ENCODE measurements at regions of chr19 and their contacts with region 1.

Region 1: DNA sequence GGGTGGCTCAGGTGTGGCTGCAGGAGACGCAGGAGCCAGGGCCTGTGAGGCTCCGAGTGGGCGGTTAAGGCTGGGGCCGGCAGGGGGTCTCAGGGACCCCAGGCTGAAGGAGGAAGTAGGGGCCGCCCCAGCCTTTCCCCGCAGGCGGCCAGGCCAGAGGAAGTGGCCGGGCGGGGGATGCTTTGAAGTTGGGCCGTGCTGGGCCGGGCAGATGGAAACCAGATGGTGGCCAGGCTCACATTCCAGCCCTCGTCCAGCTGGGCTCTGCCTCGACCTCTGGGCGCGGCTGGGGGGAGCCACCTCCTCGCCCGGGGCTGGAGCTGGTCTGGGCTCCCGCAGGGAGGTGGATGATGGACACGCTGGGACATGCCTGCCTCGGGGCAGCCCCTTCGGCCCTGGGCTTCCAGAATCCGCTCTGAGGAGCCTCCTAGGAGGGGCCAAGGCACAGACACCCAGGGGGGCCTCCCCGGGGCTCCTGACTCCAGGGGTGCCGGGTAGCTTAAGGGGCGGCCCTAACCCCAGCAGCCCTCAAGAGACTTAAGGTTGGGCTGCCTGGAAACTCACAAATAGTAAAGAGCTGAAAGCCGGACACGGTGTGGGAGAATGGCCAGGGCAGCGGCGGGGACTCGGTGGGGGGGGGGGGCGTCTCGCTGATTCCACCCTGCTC is 7.5 kb downstream of the ARID3A start:
- DNase-seq: peak; percentile 94
- ATAC-seq: peak; percentile 95
- H3K4me3 ChIP-seq: peak overlapping the region; percentile 19; the same call in 1 of the 2 replicates
- H3K27ac ChIP-seq: peak overlapping the region; percentile 98
- H3K4me1 ChIP-seq: peaks cover 31% of the 10 kb centered on the region
- H3K27me3 ChIP-seq: no peaks in the 10 kb centered on the region
- CTCF ChIP-seq: peak; percentile 38
- POLR2A ChIP-seq: no peak
- RAD21 ChIP-seq: peak; percentile 38

Region 2: GRCh38 chr19:728011-728410 is 205.3 kb before region 1 on chr19:
- CTCF ChIA-PET with region 1: no interaction called
- POLR2A ChIA-PET with region 1: no interaction called
- dilution Hi-C with region 1: no loop called
- in situ Hi-C with region 1: no loop called
- intact Hi-C with region 1: no loop called
- DNase-seq: no peak
- ATAC-seq: no peak
- H3K4me3 ChIP-seq: no peak overlapping the region
- H3K27ac ChIP-seq: no peak overlapping the region
- H3K4me1 ChIP-seq: no peaks in the 10 kb centered on the region
- H3K27me3 ChIP-seq: no peaks in the 10 kb centered on the region
- CTCF ChIP-seq: no peak
- POLR2A ChIP-seq: no peak
- RAD21 ChIP-seq: no peak

Region 3: DNA sequence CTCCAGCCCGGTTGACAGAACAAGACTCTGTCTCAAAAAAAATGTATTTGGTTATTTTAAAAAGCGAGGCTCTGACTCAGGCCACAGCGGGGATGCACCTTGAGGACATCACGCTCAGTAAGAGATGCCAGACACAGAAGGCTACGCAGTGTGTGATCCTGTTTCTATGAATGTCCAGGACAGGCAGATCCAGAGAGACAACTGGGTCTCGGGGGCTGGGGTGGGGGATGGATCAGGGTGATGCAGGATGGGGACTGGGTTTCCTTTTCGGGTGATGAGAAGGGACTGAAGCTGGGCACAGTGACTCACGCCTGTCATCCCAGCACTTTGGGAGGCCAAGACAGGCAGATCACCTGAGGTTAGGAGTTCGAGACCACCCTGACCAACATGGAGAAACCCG is 45.7 kb before region 1 on chr19:
- CTCF ChIA-PET with region 1: no interaction called
- POLR2A ChIA-PET with region 1: interaction called, 21 read pairs
- dilution Hi-C with region 1: no loop called
- in situ Hi-C with region 1: no loop called
- intact Hi-C with region 1: no loop called
- DNase-seq: no peak
- ATAC-seq: no peak
- H3K4me3 ChIP-seq: no peak overlapping the region
- H3K27ac ChIP-seq: no peak overlapping the region
- H3K4me1 ChIP-seq: no peaks in the 10 kb centered on the region
- H3K27me3 ChIP-seq: no peaks in the 10 kb centered on the region
- CTCF ChIP-seq: no peak
- POLR2A ChIP-seq: no peak
- RAD21 ChIP-seq: no peak

Region 4: DNA sequence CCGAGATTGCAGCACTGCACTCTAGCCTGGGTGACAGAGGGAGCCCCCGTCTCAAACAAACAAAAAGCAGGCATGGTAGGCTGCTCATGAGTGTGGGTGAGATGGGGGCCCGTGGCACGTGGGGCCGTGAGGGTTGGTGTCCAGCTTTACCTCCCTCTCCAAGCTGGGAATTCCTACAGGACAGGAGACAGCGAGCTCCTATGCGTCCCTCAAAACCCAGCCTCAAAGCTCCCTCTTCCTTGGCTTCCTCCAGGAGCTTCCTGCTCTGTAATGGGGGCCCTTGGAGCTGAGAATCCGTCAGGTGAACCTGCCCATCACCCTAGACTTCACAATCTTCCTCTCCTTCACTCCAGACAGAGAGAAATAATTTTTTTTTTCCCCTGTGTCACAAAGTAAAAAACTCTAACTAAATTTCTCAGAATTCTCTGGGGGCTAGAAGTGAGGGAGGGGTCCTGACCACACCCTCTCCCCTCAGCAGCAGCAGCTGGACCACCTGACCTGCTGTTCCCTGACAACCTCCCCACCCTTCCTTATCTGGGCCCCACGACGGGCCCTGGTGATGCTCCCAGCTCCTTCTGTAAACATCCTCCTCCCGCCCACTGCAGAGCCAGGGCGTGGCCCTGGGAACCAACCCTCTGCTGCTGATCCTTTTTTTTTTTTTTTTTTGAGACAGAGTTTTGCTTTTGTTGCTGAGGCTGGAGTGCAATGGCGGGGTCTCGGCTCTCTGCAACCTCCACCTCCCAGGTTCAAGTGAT is 28.7 kb after region 1 on chr19:
- CTCF ChIA-PET with region 1: no interaction called
- POLR2A ChIA-PET with region 1: no interaction called
- dilution Hi-C with region 1: no loop called
- in situ Hi-C with region 1: no loop called
- intact Hi-C with region 1: loop called (anchors 2 kb)
- DNase-seq: peak; percentile 68
- ATAC-seq: peak; percentile 91
- H3K4me3 ChIP-seq: no peak overlapping the region
- H3K27ac ChIP-seq: peak overlapping the region; percentile 30; the same call in 1 of the 2 replicates
- H3K4me1 ChIP-seq: peaks cover 10% of the 10 kb centered on the region
- H3K27me3 ChIP-seq: no peaks in the 10 kb centered on the region
- CTCF ChIP-seq: no peak
- POLR2A ChIP-seq: no peak
- RAD21 ChIP-seq: no peak

Region 5: GRCh38 chr19:991174-991918 is 58.0 kb after region 1 on chr19:
- CTCF ChIA-PET with region 1: no interaction called
- POLR2A ChIA-PET with region 1: no interaction called
- dilution Hi-C with region 1: no loop called
- in situ Hi-C with region 1: no loop called
- intact Hi-C with region 1: no loop called
- DNase-seq: peak; percentile 46
- ATAC-seq: peak; percentile 46
- H3K4me3 ChIP-seq: no peak overlapping the region
- H3K27ac ChIP-seq: no peak overlapping the region
- H3K4me1 ChIP-seq: peaks cover 4% of the 10 kb centered on the region
- H3K27me3 ChIP-seq: peaks cover 8% of the 10 kb centered on the region
- CTCF ChIP-seq: no peak
- POLR2A ChIP-seq: no peak
- RAD21 ChIP-seq: no peak